ENCODE measurements at regions of chr7 and their contacts with region 1.

Region 1: DNA sequence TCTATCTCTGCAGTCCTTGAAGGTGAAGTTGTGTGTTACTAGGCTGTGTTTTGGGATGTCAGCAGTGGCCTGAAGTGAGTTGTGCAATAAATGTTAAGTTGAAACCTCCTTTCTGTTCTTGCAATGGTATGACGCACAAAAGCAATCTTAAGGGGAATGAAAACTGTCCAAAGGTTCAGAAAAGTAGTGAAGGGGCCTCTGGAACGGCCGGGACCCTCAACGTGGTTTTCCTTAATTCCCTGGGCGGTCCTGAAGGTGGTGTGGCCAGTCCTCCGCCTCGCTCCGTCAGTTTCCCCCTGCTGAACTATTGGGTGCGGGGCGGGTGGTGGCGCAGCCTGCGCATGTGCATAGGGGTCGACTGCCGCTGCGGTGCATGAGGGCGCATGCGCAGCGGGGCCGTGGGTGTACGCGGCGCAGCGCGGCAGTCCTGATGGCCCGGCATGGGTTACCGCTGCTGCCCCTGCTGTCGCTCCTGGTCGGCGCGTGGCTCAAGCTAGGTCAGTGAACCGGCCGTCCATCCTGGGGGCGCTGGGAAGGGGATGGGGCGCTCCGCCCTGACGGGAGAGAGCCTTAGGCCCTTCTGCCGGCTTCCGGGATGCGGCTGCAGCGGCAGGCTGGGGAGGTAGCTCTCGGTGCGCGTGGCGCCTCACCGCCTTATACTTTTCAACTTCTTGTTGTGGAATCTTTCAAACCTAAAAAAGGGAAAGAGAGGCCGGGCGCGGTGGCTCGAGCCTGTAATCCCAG is at the start of gene SUMF2:
- DNase-seq: peak; percentile 93
- ATAC-seq: peak; percentile 91
- H3K4me3 Mint-ChIP-seq: peak within 1 kb of the TSS; percentile 91
- H3K27ac Mint-ChIP-seq: peak within 1 kb of the TSS; percentile 91
- H3K4me1 Mint-ChIP-seq: peaks cover 45% of the 10 kb centered on the region
- H3K27me3 Mint-ChIP-seq: no peaks in the 10 kb centered on the region
- total RNA-seq, gene SUMF2: 117 to 128 TPM

Region 2: GRCh38 chr7:55964261-55965099 is 99.6 kb before region 1 on chr7 and contains the start of gene NIPSNAP2:
- CTCF ChIA-PET with region 1: interaction called, 5 read pairs
- POLR2A ChIA-PET with region 1: interaction called, 6 read pairs
- intact Hi-C with region 1: loop called in 1 of 2 experiments (anchors 1 kb)
- DNase-seq: peak; percentile 81
- ATAC-seq: peak; percentile 92
- H3K4me3 Mint-ChIP-seq: peak within 1 kb of the TSS; percentile 86
- H3K27ac Mint-ChIP-seq: peak within 1 kb of the TSS; percentile 90
- H3K4me1 Mint-ChIP-seq: peaks cover 33% of the 10 kb centered on the region
- H3K27me3 Mint-ChIP-seq: no peaks in the 10 kb centered on the region
- total RNA-seq, gene NIPSNAP2: 60.5 to 69.8 TPM

Region 3: GRCh38 chr7:56033671-56034432 is 30.2 kb before region 1 on chr7:
- CTCF ChIA-PET with region 1: no interaction called
- POLR2A ChIA-PET with region 1: no interaction called
- intact Hi-C with region 1: loop called in 1 of 2 experiments (anchors 1 kb)
- DNase-seq: peak; percentile 78
- ATAC-seq: peak; percentile 96
- H3K4me3 Mint-ChIP-seq: peak overlapping the region; percentile 81
- H3K27ac Mint-ChIP-seq: peak overlapping the region; percentile 84
- H3K4me1 Mint-ChIP-seq: peaks cover 8% of the 10 kb centered on the region
- H3K27me3 Mint-ChIP-seq: no peaks in the 10 kb centered on the region

Region 4: DNA sequence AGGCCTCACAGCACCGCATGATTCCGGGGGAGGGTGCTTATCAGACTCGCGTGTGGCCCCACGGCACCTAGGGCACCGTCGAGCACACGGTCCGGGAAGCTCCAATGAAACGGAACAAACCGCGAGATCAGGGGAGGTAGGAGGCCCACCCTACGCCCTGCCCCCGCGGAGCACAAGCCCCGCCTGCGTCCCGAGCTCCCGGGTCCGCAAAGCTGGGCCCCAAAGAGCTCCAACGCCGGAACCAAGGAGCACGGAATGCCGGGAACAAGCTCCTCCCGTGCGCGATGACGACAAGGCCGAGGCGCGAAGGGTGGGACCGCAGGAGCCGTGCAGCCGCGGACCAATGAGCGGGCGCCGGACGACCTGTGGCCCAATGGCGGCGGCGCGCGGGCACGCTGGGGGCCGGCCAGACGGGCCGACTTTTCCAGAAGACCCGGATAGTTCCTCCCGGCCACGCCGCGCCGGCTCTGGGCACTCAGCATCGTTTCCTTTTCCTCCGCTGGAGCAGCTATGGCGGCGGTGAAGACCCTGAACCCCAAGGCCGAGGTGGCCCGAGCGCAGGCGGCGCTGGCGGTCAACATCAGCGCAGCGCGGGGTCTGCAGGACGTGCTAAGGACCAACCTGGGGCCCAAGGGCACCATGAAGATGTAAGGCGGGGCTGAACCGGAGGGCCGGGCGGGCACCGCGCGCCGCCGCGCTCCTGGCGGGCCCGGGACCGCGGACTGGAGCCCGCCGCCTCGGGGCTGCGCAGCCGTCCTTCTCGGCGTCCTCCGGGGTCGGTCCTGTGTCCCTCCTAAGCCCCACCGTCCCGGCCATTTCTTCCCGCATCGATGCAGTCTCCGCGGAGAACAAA is 12.5 kb before region 1 on chr7 and contains the starts of genes CCT6A and PSPH:
- CTCF ChIA-PET with region 1: interaction called, 5 read pairs
- POLR2A ChIA-PET with region 1: interaction called, 14 read pairs
- intact Hi-C with region 1: loop called (anchors 1 kb)
- DNase-seq: peak; percentile 95
- ATAC-seq: peak; percentile 95
- H3K4me3 Mint-ChIP-seq: peak within 1 kb of the TSS; percentile 96
- H3K27ac Mint-ChIP-seq: peak within 1 kb of the TSS; percentile 95
- H3K4me1 Mint-ChIP-seq: peaks cover 49% of the 10 kb centered on the region
- H3K27me3 Mint-ChIP-seq: no peaks in the 10 kb centered on the region
- total RNA-seq, gene CCT6A: 182 to 237 TPM
- total RNA-seq, gene PSPH: 24.4 to 30.3 TPM

Region 5: GRCh38 chr7:56074371-56074791 is 10.3 kb after region 1 on chr7:
- CTCF ChIA-PET with region 1: interaction called, 11 read pairs
- POLR2A ChIA-PET with region 1: interaction called, 7 read pairs
- intact Hi-C with region 1: no loop called
- DNase-seq: peak; percentile 78
- ATAC-seq: peak; percentile 88
- H3K4me3 Mint-ChIP-seq: no peak overlapping the region
- H3K27ac Mint-ChIP-seq: peak overlapping the region; percentile 11
- H3K4me1 Mint-ChIP-seq: peaks cover 6% of the 10 kb centered on the region
- H3K27me3 Mint-ChIP-seq: no peaks in the 10 kb centered on the region

Region 6: DNA sequence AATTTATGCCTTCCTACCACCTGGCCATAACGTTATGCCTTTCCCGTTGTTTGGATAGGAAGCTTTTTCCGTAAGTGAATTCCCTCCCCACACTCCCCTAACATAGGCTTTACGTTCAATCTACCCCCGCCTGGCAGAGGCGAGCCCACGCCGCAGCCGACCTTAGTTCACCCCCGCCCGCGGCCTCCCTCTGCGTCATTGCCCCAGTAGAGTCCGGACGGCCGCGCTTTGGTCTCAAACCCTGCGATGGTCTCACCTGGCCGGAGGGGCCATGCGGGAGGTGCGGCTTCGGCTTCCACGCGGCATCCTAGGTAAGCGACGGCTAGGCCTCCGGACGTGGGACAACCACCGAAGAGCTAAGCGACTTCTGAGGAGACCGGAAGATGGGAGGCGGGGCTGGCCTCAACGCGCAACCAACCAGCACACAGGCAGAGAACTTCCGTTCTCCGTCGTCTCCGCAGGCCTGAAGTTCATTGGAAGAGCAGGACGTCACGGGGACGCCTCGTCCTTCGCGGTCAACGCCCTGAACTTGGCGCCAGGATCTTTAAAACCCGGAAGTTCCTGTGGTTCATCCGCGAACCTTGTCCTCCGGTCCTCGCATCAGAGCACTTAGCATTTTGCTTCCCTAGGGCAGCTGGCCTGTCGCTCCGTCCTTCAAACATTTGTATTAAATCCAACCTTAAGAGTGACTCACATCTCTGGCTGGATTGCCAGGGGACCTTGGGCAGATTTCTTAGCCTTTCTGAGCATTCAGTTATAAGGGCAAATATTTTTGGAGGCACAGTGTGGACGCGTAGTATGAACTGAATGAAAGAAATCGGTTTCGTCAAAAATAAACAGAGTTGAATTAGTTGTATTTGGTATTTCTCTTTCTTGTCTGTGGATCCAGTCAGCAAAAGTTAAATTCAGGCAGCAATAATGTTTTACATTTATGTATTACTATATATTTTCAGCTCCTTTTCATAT is 42.3 kb after region 1 on chr7 and contains the start of gene CHCHD2:
- CTCF ChIA-PET with region 1: interaction called, 6 read pairs
- POLR2A ChIA-PET with region 1: interaction called, 5 read pairs
- intact Hi-C with region 1: loop called (anchors 1 to 2 kb)
- DNase-seq: peak; percentile 96
- ATAC-seq: peak; percentile 98
- H3K4me3 Mint-ChIP-seq: peak within 1 kb of the TSS; percentile 90
- H3K27ac Mint-ChIP-seq: peak within 1 kb of the TSS; percentile 99
- H3K4me1 Mint-ChIP-seq: peaks cover 37% of the 10 kb centered on the region
- H3K27me3 Mint-ChIP-seq: no peaks in the 10 kb centered on the region
- total RNA-seq, gene CHCHD2: 537 to 693 TPM

Measured in activated CD4-positive, alpha-beta T cell treated with anti-CD3 and anti-CD28 coated beads for 36 hours (primary cell).